Activated CD4-positive, alpha-beta T cell treated with anti-CD3 and anti-CD28 coated beads for 36 hours (primary cell): ENCODE measurements at regions of chr11 and their contacts with region 1.

Region 1: GRCh38 chr11:14075118-14076078 is 112.9 kb downstream of the SPON1 start:
- DNase-seq: peak; percentile 82
- ATAC-seq: peak; percentile 96
- H3K4me3 Mint-ChIP-seq: peak overlapping the region; percentile 37
- H3K27ac Mint-ChIP-seq: peak overlapping the region; percentile 37
- H3K4me1 Mint-ChIP-seq: peaks cover 58% of the 10 kb centered on the region
- H3K27me3 Mint-ChIP-seq: no peaks in the 10 kb centered on the region

Region 2: GRCh38 chr11:13276832-13277767 is 798.3 kb before region 1 on chr11:
- CTCF ChIA-PET with region 1: no interaction called
- POLR2A ChIA-PET with region 1: no interaction called
- intact Hi-C with region 1: loop called in 1 of 2 experiments (anchors 10 kb)
- DNase-seq: peak; percentile 98
- ATAC-seq: peak; percentile 93
- H3K4me3 Mint-ChIP-seq: peak overlapping the region; percentile 87
- H3K27ac Mint-ChIP-seq: peak overlapping the region; percentile 84
- H3K4me1 Mint-ChIP-seq: peaks cover 43% of the 10 kb centered on the region
- H3K27me3 Mint-ChIP-seq: peaks cover 6% of the 10 kb centered on the region

Region 3: GRCh38 chr11:13668102-13668956 is 407.1 kb before region 1 on chr11 and contains the start of gene FAR1:
- CTCF ChIA-PET with region 1: no interaction called
- POLR2A ChIA-PET with region 1: no interaction called
- intact Hi-C with region 1: loop called in 1 of 2 experiments (anchors 2 kb)
- DNase-seq: peak; percentile 98
- ATAC-seq: peak; percentile 92
- H3K4me3 Mint-ChIP-seq: peak within 1 kb of the TSS; percentile 95
- H3K27ac Mint-ChIP-seq: peak within 1 kb of the TSS; percentile 96
- H3K4me1 Mint-ChIP-seq: peaks cover 48% of the 10 kb centered on the region
- H3K27me3 Mint-ChIP-seq: peaks cover 9% of the 10 kb centered on the region
- total RNA-seq, gene FAR1: 34.8 to 36.4 TPM

Region 4: GRCh38 chr11:13868710-13869397 is 206.5 kb before region 1 on chr11:
- CTCF ChIA-PET with region 1: no interaction called
- POLR2A ChIA-PET with region 1: no interaction called
- intact Hi-C with region 1: loop called (anchors 1 to 2 kb)
- DNase-seq: peak; percentile 30
- ATAC-seq: peak; percentile 96
- H3K4me3 Mint-ChIP-seq: peak overlapping the region; percentile 10
- H3K27ac Mint-ChIP-seq: peak overlapping the region; percentile 91
- H3K4me1 Mint-ChIP-seq: peaks cover 35% of the 10 kb centered on the region
- H3K27me3 Mint-ChIP-seq: no peaks in the 10 kb centered on the region

Region 5: GRCh38 chr11:13962562-13963168 is 112.7 kb before region 1 on chr11 and contains the start of gene SPON1:
- CTCF ChIA-PET with region 1: interaction called, 3 read pairs
- POLR2A ChIA-PET with region 1: no interaction called
- intact Hi-C with region 1: loop called in 1 of 2 experiments (anchors 5 kb)
- DNase-seq: peak; percentile 69
- ATAC-seq: peak; percentile 78
- H3K4me3 Mint-ChIP-seq: peak within 1 kb of the TSS; percentile 47
- H3K27ac Mint-ChIP-seq: no peak within 1 kb of the TSS
- H3K4me1 Mint-ChIP-seq: peaks cover 12% of the 10 kb centered on the region
- H3K27me3 Mint-ChIP-seq: peaks cover 47% of the 10 kb centered on the region
- total RNA-seq, gene SPON1: 0.26 to 0.41 TPM

Region 6: GRCh38 chr11:14105446-14105845 is 30.0 kb after region 1 on chr11:
- CTCF ChIA-PET with region 1: interaction called, 4 read pairs
- POLR2A ChIA-PET with region 1: no interaction called
- intact Hi-C with region 1: loop called in 1 of 2 experiments (anchors 2 kb)
- DNase-seq: peak; percentile 29
- ATAC-seq: peak; percentile 65
- H3K4me3 Mint-ChIP-seq: no peak overlapping the region
- H3K27ac Mint-ChIP-seq: no peak overlapping the region
- H3K4me1 Mint-ChIP-seq: peaks cover 27% of the 10 kb centered on the region
- H3K27me3 Mint-ChIP-seq: no peaks in the 10 kb centered on the region

Region 7: DNA sequence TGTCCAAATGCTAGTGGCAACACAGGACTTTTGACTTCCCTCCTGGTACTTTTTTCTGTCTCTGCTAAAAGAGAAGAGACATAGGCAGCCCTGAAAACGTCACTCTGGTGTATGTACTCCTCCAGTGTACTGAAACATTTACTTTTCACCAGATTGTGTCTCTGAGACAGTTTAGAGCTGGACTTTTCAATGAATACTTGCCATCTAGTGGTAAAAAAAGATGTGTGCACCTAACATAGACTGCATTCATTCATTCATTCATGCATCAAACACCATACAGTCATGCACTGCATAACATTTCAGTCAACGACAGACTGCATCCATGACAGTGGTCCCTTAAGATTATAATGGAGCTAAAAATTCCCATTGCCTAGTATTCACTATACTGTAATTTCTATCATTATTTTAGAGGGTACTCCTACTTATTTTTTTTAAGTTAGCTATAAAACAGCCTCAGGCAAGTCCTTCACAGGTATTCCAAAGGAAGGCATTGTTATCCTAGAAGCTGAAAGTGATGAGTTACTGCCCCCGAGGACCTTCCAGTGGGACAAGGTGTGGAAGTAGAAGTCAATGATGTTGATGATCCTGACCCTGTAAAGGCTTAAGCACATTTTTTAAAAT is 73.4 kb after region 1 on chr11:
- CTCF ChIA-PET with region 1: interaction called, 6 read pairs
- POLR2A ChIA-PET with region 1: no interaction called
- intact Hi-C with region 1: loop called (anchors 1 to 2 kb)
- DNase-seq: no peak
- ATAC-seq: peak; percentile 63
- H3K4me3 Mint-ChIP-seq: no peak overlapping the region
- H3K27ac Mint-ChIP-seq: no peak overlapping the region
- H3K4me1 Mint-ChIP-seq: peaks cover 10% of the 10 kb centered on the region
- H3K27me3 Mint-ChIP-seq: no peaks in the 10 kb centered on the region